HEK293T (cell line): ENCODE measurements at regions of chr17 and their contacts with region 1.

Region 1: DNA sequence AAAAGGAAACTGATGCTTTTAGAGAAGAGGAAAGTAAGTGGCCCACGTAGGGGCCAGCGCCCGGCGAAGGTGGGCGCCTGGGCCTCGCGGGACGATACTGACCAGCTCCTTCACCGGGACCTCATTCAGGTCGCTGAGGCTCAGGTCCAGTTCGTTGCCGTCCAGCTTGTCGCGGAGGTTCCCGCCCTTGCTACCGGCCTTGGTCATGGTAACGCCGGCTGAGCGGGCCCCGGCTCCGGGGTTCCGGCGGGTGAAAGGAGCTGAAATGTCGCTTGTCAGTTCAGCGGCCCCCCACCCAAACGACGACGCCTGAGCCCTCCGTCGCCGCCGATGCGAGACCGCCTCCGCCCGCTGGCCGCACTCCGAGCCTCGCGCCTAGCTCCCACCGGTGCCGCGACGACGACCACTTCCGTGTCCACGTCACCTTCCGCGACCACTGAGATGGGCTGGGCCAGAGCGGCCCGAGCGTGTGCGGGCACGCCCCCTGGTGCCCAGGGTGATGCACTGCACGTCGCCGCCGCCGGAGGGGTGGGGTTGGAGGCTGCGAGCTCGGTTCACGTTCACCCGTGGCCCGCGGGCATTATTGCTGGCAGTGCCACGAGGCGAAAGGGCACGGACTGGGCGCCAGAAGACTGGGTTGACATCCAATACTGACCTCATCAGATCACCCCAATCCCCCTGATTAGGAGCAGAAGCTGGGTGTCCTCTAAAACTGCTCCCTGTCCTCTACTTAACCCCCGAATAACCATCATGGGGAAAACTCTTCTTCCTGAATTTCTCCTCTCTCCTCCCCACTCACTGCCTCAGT is at the start of gene LRRC59:
- DNase-seq: peak; percentile 95

Region 2: DNA sequence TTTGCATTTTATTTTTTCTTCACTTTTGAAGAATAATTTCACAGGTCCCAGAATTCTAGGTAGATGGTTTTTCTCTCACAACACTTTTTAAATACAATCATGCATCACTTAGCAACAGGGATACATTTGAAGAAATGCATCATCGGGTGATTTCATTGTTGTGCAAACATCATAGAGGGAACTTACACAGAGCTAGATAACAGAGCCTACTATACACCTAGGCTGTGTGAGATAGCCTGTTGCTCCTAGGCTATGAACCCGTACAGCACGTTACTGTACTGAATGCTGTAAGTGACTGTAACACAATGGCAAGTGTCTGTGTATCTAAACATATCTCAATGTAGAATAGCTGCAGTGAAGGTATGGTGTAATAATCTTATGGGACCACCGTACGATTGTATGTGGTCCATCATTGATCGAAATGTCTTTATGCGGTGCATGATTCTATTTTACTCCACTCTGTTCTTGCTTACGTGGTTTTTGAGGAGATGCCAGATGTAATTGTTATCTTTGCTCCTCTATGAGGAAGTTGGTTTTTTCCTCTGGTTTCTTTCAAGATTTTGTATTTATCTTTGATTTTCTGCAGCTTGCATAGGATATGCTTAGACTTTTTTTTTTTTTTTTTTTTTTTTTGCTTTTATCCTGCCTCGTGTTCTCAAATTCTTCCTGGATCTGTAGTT is 158.6 kb before region 1 on chr17:
- CTCF ChIA-PET with region 1: no interaction called
- POLR2A ChIA-PET with region 1: no interaction called
- DNase-seq: no peak

Region 3: GRCh38 chr17:50361561-50362480 is 35.5 kb before region 1 on chr17:
- CTCF ChIA-PET with region 1: interaction called, 3 read pairs
- POLR2A ChIA-PET with region 1: interaction called, 17 read pairs
- DNase-seq: peak; percentile 83

Region 4: DNA sequence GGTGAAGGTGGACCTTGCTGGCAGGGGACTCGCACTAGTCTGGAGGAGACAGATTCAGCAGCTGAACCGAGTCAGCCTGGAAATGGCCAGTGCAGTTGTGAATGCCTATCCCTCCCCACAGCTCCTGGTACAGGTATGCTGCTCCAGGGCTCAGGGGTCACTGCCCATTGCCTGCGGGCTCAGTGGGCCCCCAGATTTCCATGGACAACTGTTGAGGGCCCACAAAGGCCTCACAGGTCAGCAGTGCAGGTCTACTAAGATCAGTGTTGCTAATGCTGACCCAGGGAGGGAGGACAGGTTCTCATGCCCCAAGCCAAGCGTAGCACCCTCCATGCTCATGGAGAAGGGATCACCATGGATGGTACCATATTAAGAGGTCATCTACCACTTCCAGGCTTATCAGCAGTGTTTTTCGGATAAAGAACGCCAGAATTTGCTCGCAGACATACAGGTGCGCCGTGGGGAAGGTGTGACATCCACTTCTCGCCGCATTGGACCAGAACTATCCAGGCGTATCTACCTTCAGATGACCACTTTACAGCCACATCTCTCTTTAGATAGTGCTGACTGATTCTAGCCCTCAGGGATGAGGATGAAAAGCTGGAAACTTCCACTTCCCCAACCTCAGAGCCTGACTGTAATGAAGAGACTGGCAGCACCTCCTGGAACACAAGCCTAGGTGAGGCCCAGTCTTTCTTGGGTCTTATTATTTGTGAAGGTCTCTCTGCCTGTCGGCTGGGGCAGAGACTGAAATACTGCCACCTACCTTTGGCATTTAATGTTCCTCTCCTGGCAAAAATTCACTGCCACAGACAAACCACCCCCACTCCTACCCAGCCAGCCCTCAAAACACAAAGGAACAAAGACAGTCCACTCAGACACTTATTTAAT is 16.7 kb before region 1 on chr17:
- CTCF ChIA-PET with region 1: interaction called, 7 read pairs
- POLR2A ChIA-PET with region 1: interaction called, 24 read pairs
- DNase-seq: no peak

Region 5: GRCh38 chr17:50425682-50426471 is 28.6 kb after region 1 on chr17 and contains the start of gene ACSF2:
- CTCF ChIA-PET with region 1: interaction called, 12 read pairs
- POLR2A ChIA-PET with region 1: interaction called, 41 read pairs
- DNase-seq: peak; percentile 76

Region 6: DNA sequence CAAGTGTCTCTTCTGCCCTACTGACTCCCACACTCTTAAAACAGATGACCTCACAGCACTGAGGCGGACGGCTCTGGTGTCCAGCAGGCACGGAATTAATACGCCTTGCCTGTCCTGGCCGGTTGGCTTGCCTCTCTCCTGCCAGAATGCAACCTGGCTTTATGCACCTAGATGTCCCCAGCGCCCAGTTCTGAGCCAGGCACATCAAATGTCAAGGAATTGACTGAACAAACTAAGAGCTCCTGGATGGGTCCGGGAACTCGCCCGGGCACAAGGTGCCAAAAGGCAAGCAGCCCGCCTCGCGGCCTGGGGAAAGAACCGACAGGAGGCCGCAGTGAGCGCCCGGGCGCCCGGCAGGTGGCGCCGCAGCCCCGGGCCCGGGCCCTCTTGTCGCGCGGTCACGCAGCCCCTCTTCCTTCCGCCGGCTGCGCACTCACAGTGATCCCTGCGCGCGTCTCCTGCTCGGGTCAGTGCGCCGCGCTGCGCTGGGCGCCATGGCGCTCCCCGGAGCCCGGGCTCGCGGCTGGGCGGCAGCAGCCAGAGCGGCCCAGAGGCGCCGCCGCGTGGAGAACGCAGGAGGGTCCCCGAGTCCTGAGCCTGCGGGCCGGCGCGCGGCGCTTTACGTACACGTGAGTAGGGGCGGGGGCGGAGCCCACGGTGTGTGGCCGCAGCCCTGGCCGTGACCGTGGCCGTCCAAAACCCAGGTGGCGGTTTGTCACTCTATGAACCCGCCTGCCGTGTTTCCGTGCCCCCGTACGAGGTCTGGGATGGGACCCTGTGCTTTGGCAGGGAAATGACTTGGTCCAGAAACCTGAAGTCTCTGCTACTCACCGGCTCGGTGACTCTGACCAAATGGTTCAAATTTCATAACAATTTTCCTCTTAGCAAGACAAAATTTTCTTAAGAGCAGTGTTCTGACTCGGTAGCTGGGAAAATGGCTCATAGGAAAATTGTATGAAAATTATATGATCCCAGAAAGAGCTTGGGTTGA is 81.4 kb after region 1 on chr17 and contains the start of gene RSAD1:
- CTCF ChIA-PET with region 1: interaction called, 9 read pairs
- POLR2A ChIA-PET with region 1: interaction called, 23 read pairs
- DNase-seq: peak; percentile 85